ENCODE measurements at regions of chr10 and their contacts with region 1.

Region 1: DNA sequence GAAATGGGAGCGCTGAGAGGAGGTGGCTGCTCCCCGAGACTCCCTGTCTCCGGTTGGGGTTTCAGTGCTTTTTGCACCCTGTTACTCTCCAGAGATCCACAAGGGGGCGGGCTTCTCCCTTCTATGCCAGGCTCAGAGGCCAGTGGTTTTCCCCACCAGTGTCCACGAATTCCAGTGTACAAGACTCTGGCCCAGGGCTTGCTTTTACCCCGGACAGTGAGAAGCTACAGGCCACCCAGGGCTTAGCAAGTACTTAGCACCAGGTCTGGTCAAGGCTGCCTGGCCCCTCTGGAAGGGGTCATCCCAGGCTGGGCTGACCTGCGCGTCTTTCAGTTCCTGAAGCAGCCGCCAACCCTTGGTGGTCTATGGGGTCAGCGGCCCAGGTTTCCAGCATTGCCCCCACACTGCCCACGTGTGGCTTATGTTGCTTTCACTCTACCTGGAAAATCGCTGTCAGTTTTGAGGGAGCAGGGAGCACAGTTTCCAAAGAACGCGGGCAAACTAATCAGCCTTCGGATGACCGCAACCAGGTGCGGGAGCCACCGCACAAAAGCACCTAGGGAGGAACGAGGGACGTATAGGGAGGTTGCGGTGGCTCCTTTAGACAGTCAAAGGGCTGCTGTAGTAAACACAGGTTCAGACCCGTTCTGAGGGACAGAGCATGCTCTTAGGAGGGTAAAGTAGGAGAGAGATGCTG is 6.8 kb downstream of the CYP26A1 start:
- DNase-seq: peak; percentile 52
- H3K4me3 ChIP-seq: no peak overlapping the region
- H3K27ac ChIP-seq: no peak overlapping the region
- H3K4me1 ChIP-seq: peaks cover 0 to 6% (median 0%) of the 10 kb centered on the region in 4 donors
- H3K27me3 ChIP-seq: peaks cover 52% of the 10 kb centered on the region
- CTCF ChIP-seq: peak; percentile 78 to 87 (median 80)
- EP300 ChIP-seq: no peak
- POLR2A ChIP-seq: no peak

Region 2: GRCh38 chr10:93293999-93294398 is 213.5 kb after region 1 on chr10:
- in situ Hi-C with region 1: loop called in 1 of 4 experiments (anchors 10 kb)
- intact Hi-C with region 1: loop called (anchors 10 kb)
- DNase-seq: no peak
- H3K4me3 ChIP-seq: no peak overlapping the region
- H3K27ac ChIP-seq: no peak overlapping the region
- H3K4me1 ChIP-seq: no peaks in the 10 kb centered on the region
- H3K27me3 ChIP-seq: no peaks in the 10 kb centered on the region
- CTCF ChIP-seq: no peak
- EP300 ChIP-seq: no peak
- POLR2A ChIP-seq: no peak

Region 3: GRCh38 chr10:93352638-93353383 is 272.3 kb after region 1 on chr10:
- in situ Hi-C with region 1: loop called in 1 of 4 experiments (anchors 10 kb)
- intact Hi-C with region 1: no loop called
- DNase-seq: no peak
- H3K4me3 ChIP-seq: no peak overlapping the region
- H3K27ac ChIP-seq: no peak overlapping the region
- H3K4me1 ChIP-seq: no peaks in the 10 kb centered on the region
- H3K27me3 ChIP-seq: no peaks in the 10 kb centered on the region
- CTCF ChIP-seq: peak; percentile 61 to 79 (median 68)
- EP300 ChIP-seq: no peak
- POLR2A ChIP-seq: no peak

Region 4: GRCh38 chr10:93503075-93503474 is 422.6 kb after region 1 on chr10:
- in situ Hi-C with region 1: loop called in 1 of 4 experiments (anchors 25 kb)
- intact Hi-C with region 1: no loop called
- DNase-seq: no peak
- H3K4me3 ChIP-seq: no peak overlapping the region
- H3K27ac ChIP-seq: no peak overlapping the region
- H3K4me1 ChIP-seq: no peaks in the 10 kb centered on the region
- H3K27me3 ChIP-seq: no peaks in the 10 kb centered on the region
- CTCF ChIP-seq: no peak
- EP300 ChIP-seq: no peak
- POLR2A ChIP-seq: no peak